HEK293 (cell line): ENCODE measurements at regions of chr1 and their contacts with region 1.

Region 1: DNA sequence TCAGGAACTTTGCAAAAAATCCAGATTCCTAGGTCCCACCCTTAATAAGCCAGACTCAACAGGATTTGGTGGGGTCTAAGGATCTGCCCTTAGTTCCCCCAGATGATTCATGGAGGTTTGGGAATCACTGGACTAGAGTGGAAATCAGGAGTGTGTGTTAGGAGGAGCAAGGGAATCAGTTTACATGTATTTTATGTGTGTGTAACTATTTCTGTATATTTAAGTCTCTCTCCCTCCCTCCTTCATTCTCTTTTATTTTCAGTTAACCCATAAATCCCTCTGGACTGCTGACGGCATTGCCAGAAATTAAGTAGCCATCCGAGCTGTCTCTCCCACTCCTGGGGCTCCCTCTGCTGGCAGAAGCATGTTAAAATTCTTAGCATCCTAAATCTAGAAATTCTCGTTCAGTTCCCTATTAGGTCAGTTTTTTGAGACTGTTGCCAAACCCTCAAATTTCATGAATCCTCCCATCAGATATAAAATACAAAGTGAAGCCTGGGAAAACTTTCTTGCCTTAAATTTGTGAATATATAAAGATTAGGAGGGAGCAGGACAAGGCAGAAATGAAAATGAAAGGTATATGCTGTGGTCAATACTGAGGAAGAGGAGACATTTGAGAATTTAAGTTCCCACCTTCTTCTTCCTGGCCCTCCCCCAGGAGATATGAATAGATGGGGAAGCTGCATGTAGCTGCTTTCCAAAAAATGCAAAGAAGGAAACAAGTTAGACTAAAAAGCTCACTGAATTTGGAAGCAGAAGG is 11.7 kb upstream of the HSD11B1 start:
- H3K4me3 ChIP-seq: no peak overlapping the region
- H3K27ac ChIP-seq: no peak overlapping the region
- H3K4me1 ChIP-seq: no peaks in the 10 kb centered on the region
- CTCF ChIP-seq: peak; percentile 55; the same call in 1 of the 2 replicates

Region 2: DNA sequence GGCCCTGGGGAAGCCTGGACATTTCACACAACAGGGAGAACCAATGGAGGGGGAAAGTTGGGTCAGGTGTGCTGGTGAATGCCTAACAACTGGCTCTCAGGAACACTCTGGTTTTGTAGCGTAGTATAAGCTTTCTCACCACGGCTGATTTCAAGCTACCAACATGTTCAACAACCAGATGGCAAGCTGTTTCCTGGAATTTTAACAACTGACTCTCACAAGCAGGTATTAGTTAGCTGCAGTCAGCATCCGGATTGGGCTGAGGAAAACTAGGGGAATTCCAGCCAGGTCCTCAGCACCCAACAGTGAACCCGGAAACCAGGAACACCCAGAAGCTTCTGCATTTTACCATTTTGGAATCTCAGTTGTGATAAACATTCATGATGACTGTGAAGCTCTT is 271.7 kb before region 1 on chr1:
- CTCF ChIA-PET with region 1: no interaction called
- POLR2A ChIA-PET with region 1: no interaction called
- H3K4me3 ChIP-seq: no peak overlapping the region
- H3K27ac ChIP-seq: no peak overlapping the region
- H3K4me1 ChIP-seq: no peaks in the 10 kb centered on the region
- CTCF ChIP-seq: no peak

Region 3: GRCh38 chr1:209590405-209590804 is 102.5 kb before region 1 on chr1:
- CTCF ChIA-PET with region 1: interaction called, 46 read pairs
- POLR2A ChIA-PET with region 1: no interaction called
- H3K4me3 ChIP-seq: no peak overlapping the region
- H3K27ac ChIP-seq: no peak overlapping the region
- H3K4me1 ChIP-seq: no peaks in the 10 kb centered on the region
- CTCF ChIP-seq: no peak

Region 4: GRCh38 chr1:209595599-209596285 is 97.2 kb before region 1 on chr1:
- CTCF ChIA-PET with region 1: interaction called, 46 read pairs
- POLR2A ChIA-PET with region 1: no interaction called
- H3K4me3 ChIP-seq: no peak overlapping the region
- H3K27ac ChIP-seq: no peak overlapping the region
- H3K4me1 ChIP-seq: no peaks in the 10 kb centered on the region
- CTCF ChIP-seq: no peak